ENCODE measurements at regions of chr20 and their contacts with region 1.

Region 1: GRCh38 chr20:5652626-5653553 is 97.3 kb upstream of the SHLD1 start:
- DNase-seq: peak; percentile 64
- H3K4me3 ChIP-seq: no peak overlapping the region
- H3K27ac ChIP-seq: peak overlapping the region; percentile 85
- H3K4me1 ChIP-seq: peaks cover 96% of the 10 kb centered on the region
- CTCF ChIP-seq: no peak

Region 2: DNA sequence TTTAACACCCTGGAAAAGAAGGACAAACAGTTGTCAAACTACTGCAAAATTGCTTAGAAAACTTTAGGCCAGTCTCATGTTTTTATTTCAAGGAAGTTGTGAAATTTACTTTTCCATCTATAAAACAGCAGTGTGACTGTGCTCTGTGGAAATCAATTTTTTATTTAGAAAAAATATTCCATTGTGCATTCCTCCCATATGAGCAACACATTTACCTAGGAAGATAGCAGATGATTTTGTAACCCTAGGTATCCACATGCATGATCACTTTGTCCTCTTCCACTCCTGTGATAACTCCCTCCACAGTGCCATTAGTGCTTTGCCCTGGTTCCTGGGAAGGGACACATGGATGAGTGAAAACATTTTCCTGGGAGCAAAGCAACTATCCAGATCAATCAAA is 27.3 kb after region 1 on chr20:
- CTCF ChIA-PET with region 1: no interaction called
- POLR2A ChIA-PET with region 1: interaction called, 58 read pairs
- intact Hi-C with region 1: no loop called
- DNase-seq: no peak
- H3K4me3 ChIP-seq: no peak overlapping the region
- H3K27ac ChIP-seq: no peak overlapping the region
- H3K4me1 ChIP-seq: peaks cover 63% of the 10 kb centered on the region
- CTCF ChIP-seq: no peak